Natural killer cell (primary cell): ENCODE measurements at regions of chr21 and their contacts with region 1.

Region 1: GRCh38 chr21:14259747-14260146 is 43.8 kb downstream of the RBM11 start:
- DNase-seq: peak in 1 of 2 donors; percentile 61
- ATAC-seq: peak in 2 of 3 donors; percentile 36 to 53
- H3K4me3 ChIP-seq: no peak overlapping the region
- H3K4me3 Mint-ChIP-seq: no peak overlapping the region
- H3K27ac ChIP-seq: no peak overlapping the region
- H3K27ac Mint-ChIP-seq: no peak overlapping the region
- H3K4me1 ChIP-seq: no peaks in the 10 kb centered on the region
- H3K4me1 Mint-ChIP-seq: no peaks in the 10 kb centered on the region
- H3K27me3 ChIP-seq: peaks cover 2% of the 10 kb centered on the region
- H3K27me3 Mint-ChIP-seq: peaks cover 3 to 6% of the 10 kb centered on the region in 2 donors
- CTCF ChIP-seq: peak; percentile 45

Region 2: DNA sequence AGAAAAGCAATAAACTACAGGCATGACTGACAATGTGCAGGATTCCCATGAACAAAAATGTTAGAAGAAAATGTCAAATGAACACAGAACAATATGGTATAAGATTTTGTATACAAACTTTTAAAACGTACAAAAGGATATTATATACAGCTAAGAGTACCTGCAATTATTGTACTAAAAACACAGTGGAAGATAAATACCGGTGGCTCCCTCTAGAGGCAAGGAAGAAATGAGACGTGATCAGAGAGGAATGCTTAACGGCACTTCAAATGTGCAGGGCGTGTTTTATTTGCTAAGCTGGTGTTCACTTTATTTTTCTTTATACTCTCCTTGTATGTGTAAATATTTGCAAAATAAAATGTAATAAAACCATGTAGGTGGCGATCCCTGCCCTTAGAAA is 478.2 kb after region 1 on chr21:
- intact Hi-C with region 1: loop called (anchors 10 kb)
- DNase-seq: peak in 1 of 2 donors; percentile 87
- ATAC-seq: peak; percentile 83 to 86 (median 83)
- H3K4me3 ChIP-seq: no peak overlapping the region
- H3K4me3 Mint-ChIP-seq: no peak overlapping the region
- H3K27ac ChIP-seq: no peak overlapping the region
- H3K27ac Mint-ChIP-seq: no peak overlapping the region
- H3K4me1 ChIP-seq: no peaks in the 10 kb centered on the region
- H3K4me1 Mint-ChIP-seq: peaks cover 0 to 4% of the 10 kb centered on the region in 2 donors
- H3K27me3 ChIP-seq: no peaks in the 10 kb centered on the region
- H3K27me3 Mint-ChIP-seq: no peaks in the 10 kb centered on the region
- CTCF ChIP-seq: peak; percentile 87

Region 3: GRCh38 chr21:15483138-15483780 is 1223.5 kb after region 1 on chr21:
- intact Hi-C with region 1: loop called (anchors 10 kb)
- DNase-seq: peak; percentile 68 to 87
- ATAC-seq: peak; percentile 95 to 100 (median 100)
- H3K4me3 ChIP-seq: no peak overlapping the region
- H3K4me3 Mint-ChIP-seq: no peak overlapping the region
- H3K27ac ChIP-seq: no peak overlapping the region
- H3K27ac Mint-ChIP-seq: no peak overlapping the region
- H3K4me1 ChIP-seq: no peaks in the 10 kb centered on the region
- H3K4me1 Mint-ChIP-seq: peaks cover 5 to 6% of the 10 kb centered on the region in 2 donors
- H3K27me3 ChIP-seq: no peaks in the 10 kb centered on the region
- H3K27me3 Mint-ChIP-seq: no peaks in the 10 kb centered on the region
- CTCF ChIP-seq: peak; percentile 84